PC-9 (cell line): ENCODE measurements at regions of chr4 and their contacts with region 1.

Region 1: DNA sequence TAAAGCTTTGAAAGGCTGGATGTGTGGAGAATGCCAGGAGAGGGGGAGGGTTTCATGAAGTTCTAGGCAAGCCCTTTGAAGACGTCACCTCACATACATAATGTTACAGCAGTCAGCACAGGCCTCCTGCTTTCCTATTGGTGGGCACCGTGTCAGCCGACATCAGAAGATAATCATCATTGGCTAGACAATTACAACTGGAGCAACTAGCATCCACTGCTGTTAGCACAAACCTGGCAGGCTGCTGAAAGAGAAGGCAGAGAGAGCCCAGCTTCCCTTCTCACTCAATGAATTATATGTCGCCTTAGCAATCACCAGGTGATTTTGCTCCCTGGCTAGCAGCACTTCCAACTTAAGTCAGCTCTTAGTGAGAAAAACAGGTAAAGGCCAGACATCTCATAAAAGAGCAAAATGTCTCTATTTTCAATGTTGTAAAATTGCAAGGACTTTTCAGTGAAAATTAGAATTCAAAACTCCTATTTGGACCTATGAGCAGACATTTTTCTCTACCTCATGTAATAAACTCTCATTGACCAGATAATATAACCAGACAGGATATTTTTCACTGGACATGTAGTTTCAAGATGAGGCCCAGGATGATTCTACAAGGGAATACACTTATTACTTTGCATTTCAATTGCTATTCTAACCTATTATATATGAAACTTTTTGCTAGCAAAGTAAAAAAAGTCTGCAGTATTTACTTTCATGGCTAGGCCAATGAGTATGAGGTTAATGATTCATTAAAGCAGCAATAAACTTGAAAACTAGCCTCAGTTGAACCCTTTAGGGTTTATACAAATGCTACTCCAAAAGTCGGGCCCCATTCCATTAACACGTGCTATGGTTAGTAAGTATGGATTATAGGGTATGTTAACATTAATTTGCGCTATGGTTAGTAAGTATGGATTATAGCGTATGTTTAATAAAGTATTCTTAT is 4.3 kb downstream of the ELOVL6 start:
- DNase-seq: no peak
- H3K4me3 ChIP-seq: no peak overlapping the region
- H3K27ac ChIP-seq: no peak overlapping the region
- H3K4me1 ChIP-seq: no peaks in the 10 kb centered on the region
- H3K27me3 ChIP-seq: no peaks in the 10 kb centered on the region
- CTCF ChIP-seq: no peak

Region 2: DNA sequence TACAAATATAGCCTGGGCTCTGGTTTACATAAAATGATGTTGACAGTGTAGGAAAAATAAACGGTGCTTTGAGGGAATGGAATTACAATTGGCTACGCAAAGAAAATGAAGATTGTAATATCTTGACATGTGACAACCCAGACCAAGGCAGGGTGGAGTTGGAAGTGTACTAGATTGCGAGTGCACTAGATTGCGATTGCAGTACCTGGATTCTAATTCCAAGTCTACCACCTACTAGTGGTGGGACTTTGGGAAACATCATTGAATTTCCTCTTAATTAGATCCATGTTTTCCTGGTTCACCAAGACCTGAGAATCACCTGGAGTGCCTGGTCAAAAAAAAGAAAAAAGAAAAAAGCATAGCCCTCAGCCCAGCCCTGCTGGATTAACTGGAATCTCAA is 262.8 kb before region 1 on chr4:
- CTCF ChIA-PET with region 1: no interaction called
- POLR2A ChIA-PET with region 1: interaction called, 12 read pairs
- intact Hi-C with region 1: no loop called
- DNase-seq: no peak
- H3K4me3 ChIP-seq: no peak overlapping the region
- H3K27ac ChIP-seq: no peak overlapping the region
- H3K4me1 ChIP-seq: peaks cover 5% of the 10 kb centered on the region; the same call in 1 of the 2 replicates
- H3K27me3 ChIP-seq: no peaks in the 10 kb centered on the region
- CTCF ChIP-seq: no peak

Region 3: DNA sequence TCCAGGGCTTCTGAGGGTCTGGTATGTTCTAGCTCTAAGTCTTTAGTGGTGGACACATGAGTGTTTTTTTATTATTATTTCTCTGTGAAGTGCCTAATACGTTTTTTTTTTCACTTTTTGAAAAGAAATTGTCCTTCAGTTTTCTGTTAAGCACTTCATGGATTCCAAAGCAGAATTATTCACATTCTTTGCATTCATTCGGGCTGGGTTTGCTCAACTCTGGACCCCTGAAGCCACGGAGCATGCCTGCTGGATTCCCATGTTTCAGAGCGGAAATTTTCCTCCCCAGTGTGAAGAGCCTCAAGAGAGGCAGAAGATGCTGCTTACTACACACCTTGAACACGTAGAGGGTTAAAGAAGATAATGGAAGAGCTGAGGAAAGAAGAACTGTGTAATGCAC is 174.0 kb before region 1 on chr4:
- CTCF ChIA-PET with region 1: interaction called, 15 read pairs
- POLR2A ChIA-PET with region 1: no interaction called
- intact Hi-C with region 1: no loop called
- DNase-seq: no peak
- H3K4me3 ChIP-seq: no peak overlapping the region
- H3K27ac ChIP-seq: no peak overlapping the region
- H3K4me1 ChIP-seq: no peaks in the 10 kb centered on the region
- H3K27me3 ChIP-seq: no peaks in the 10 kb centered on the region
- CTCF ChIP-seq: no peak

Region 4: GRCh38 chr4:110119337-110119736 is 74.8 kb before region 1 on chr4:
- CTCF ChIA-PET with region 1: interaction called, 3 read pairs
- POLR2A ChIA-PET with region 1: no interaction called
- intact Hi-C with region 1: loop called (anchors 5 kb)
- DNase-seq: peak; percentile 57 to 90
- H3K4me3 ChIP-seq: peak overlapping the region; percentile 57
- H3K27ac ChIP-seq: peak overlapping the region; percentile 96
- H3K4me1 ChIP-seq: peaks cover 25% of the 10 kb centered on the region
- H3K27me3 ChIP-seq: no peaks in the 10 kb centered on the region
- CTCF ChIP-seq: no peak

Region 5: GRCh38 chr4:110250023-110250387 is 55.9 kb after region 1 on chr4:
- CTCF ChIA-PET with region 1: interaction called, 4 read pairs
- POLR2A ChIA-PET with region 1: interaction called, 20 read pairs
- intact Hi-C with region 1: no loop called
- DNase-seq: no peak
- H3K4me3 ChIP-seq: no peak overlapping the region
- H3K27ac ChIP-seq: no peak overlapping the region
- H3K4me1 ChIP-seq: peaks cover 9% of the 10 kb centered on the region
- H3K27me3 ChIP-seq: no peaks in the 10 kb centered on the region
- CTCF ChIP-seq: no peak

Region 6: DNA sequence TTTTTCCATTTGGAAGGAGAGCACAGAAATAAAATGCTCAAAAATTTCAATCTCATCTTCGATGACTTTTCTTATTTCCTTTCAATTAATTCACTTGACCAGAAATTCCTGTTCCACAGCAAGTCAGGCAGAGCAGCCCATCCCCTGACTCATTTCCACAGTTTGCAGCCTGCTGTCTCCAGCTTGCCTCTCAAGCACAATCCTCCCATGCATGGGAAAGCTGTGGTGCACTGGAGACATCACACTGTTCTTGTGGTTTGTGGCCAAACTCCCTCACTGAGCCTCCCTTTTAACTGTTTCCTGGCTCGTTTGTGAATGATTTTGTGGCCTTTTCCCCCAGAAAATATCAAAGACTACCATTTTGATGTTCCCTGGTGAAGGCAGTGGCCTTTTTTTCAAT is 167.8 kb after region 1 on chr4:
- CTCF ChIA-PET with region 1: no interaction called
- POLR2A ChIA-PET with region 1: no interaction called
- intact Hi-C with region 1: no loop called
- DNase-seq: peak; percentile 53 to 87
- H3K4me3 ChIP-seq: peak overlapping the region; percentile 38; the same call in 1 of the 2 replicates
- H3K27ac ChIP-seq: peak overlapping the region; percentile 71
- H3K4me1 ChIP-seq: peaks cover 31% of the 10 kb centered on the region
- H3K27me3 ChIP-seq: no peaks in the 10 kb centered on the region
- CTCF ChIP-seq: no peak

Region 7: DNA sequence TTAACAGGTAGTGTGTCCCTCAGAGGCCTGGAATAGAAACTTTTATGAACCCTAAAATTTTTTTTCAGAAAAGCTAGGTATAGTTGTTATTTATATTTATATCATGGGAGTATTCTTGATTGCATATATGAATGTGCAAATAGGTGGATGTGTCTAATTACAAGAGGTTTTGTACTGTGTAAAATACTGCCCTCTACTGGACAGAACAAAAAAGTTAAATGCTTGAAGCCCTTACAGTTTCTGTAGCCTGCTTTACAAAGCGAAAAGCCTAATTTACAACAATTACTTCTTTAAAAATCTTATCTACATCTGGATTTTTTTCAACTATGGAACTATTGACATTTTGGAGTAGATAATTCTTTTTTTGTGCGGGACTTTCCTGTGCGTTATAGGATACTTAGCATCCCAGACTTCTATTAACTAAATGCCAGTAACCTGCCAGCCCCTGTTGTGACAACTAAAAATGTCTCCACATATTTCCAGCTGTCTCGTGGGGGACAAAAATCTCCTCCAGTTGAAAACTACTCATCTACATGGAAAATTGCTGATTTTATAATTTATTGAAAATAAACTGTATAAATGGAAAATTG is 317.0 kb after region 1 on chr4:
- CTCF ChIA-PET with region 1: no interaction called
- POLR2A ChIA-PET with region 1: interaction called, 3 read pairs
- intact Hi-C with region 1: loop called (anchors 5 kb)
- DNase-seq: no peak
- H3K4me3 ChIP-seq: no peak overlapping the region
- H3K27ac ChIP-seq: no peak overlapping the region
- H3K4me1 ChIP-seq: no peaks in the 10 kb centered on the region
- H3K27me3 ChIP-seq: no peaks in the 10 kb centered on the region
- CTCF ChIP-seq: peak; percentile 75

Region 8: GRCh38 chr4:110742143-110742542 is 548.1 kb after region 1 on chr4:
- CTCF ChIA-PET with region 1: no interaction called
- POLR2A ChIA-PET with region 1: no interaction called
- intact Hi-C with region 1: no loop called
- DNase-seq: no peak
- H3K4me3 ChIP-seq: no peak overlapping the region
- H3K27ac ChIP-seq: no peak overlapping the region
- H3K4me1 ChIP-seq: no peaks in the 10 kb centered on the region
- H3K27me3 ChIP-seq: no peaks in the 10 kb centered on the region
- CTCF ChIP-seq: no peak